ENCODE measurements at regions of chr12 and their contacts with region 1.

Region 1: DNA sequence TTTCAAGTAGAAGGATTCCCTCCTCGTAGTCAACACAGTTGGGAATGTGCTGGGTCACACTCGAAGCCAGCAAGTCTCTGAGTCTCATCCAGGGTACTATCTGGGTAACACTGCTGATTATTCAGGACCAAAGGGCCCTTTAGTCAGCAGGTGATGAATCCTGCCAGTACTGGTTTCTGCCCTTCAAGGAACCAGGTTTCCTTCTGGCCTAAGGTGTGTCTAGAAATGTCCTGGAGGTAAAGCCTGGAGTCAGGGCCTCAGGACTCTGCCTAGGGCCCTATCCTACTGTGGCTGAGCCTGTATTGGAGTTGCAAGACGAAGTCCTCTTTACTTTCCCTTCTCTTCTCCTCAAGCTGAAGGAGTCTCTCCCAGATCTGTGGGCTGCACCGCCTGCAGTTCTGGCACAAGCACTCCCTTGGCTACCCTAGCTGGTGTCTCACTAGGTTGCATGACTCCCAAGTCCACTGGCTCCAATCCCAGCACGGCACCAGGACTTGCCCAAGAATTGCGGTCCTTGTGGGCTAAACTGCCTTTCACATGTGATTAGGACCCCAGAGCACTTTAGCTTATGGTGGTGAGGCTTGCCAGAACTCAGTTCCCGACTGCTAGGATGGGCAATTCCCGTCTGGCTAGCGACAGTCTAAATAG is 193.7 kb upstream of the PDE3A start:
- DNase-seq: no peak
- ATAC-seq: no peak
- H3K4me3 ChIP-seq: no peak overlapping the region
- H3K27ac ChIP-seq: no peak overlapping the region
- H3K4me1 ChIP-seq: no peaks in the 10 kb centered on the region
- H3K27me3 ChIP-seq: no peaks in the 10 kb centered on the region
- CTCF ChIP-seq: no peak
- POLR2A ChIP-seq: no peak
- RAD21 ChIP-seq: no peak

Region 2: GRCh38 chr12:19779393-19780056 is 395.1 kb before region 1 on chr12:
- CTCF ChIA-PET with region 1: no interaction called
- POLR2A ChIA-PET with region 1: no interaction called
- dilution Hi-C with region 1: no loop called
- in situ Hi-C with region 1: no loop called
- intact Hi-C with region 1: no loop called
- DNase-seq: no peak
- ATAC-seq: peak; percentile 79
- H3K4me3 ChIP-seq: no peak overlapping the region
- H3K27ac ChIP-seq: no peak overlapping the region
- H3K4me1 ChIP-seq: peaks cover 13% of the 10 kb centered on the region
- H3K27me3 ChIP-seq: no peaks in the 10 kb centered on the region
- CTCF ChIP-seq: no peak
- POLR2A ChIP-seq: no peak
- RAD21 ChIP-seq: no peak

Region 3: DNA sequence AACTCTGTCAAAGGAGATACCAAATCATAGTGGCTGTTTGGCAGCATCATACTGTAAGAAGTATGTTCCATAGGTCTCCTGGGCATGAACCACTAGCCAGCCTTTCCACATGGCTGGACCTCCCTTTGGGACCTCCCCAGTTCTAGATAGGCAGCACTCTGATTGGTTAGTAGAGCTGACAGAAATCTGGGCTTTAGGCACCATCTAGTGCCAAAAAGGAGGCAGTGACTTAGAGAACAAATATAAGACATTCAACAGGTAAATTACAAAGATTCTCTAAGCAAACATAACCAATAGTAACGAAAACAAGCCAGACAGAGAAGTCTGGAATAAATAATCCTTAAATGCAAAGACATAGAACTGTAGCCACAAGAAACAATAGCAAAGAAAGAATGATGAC is 45.7 kb after region 1 on chr12:
- CTCF ChIA-PET with region 1: no interaction called
- POLR2A ChIA-PET with region 1: no interaction called
- dilution Hi-C with region 1: no loop called
- in situ Hi-C with region 1: no loop called
- intact Hi-C with region 1: loop called (anchors 1 kb)
- DNase-seq: peak; percentile 34
- ATAC-seq: 0 out of 2 replicates have a peak, but pooled peaks have one; percentile 17
- H3K4me3 ChIP-seq: no peak overlapping the region
- H3K27ac ChIP-seq: no peak overlapping the region
- H3K4me1 ChIP-seq: no peaks in the 10 kb centered on the region
- H3K27me3 ChIP-seq: no peaks in the 10 kb centered on the region
- CTCF ChIP-seq: peak; percentile 34; the same call in 1 of the 2 replicates
- POLR2A ChIP-seq: no peak
- RAD21 ChIP-seq: peak; percentile 45

Region 4: GRCh38 chr12:20494851-20495250 is 320.2 kb after region 1 on chr12:
- CTCF ChIA-PET with region 1: no interaction called
- POLR2A ChIA-PET with region 1: no interaction called
- dilution Hi-C with region 1: no loop called
- in situ Hi-C with region 1: no loop called
- intact Hi-C with region 1: no loop called
- DNase-seq: peak; percentile 59
- ATAC-seq: peak; percentile 44; the same call in 1 of the 2 replicates
- H3K4me3 ChIP-seq: no peak overlapping the region
- H3K27ac ChIP-seq: no peak overlapping the region
- H3K4me1 ChIP-seq: peaks cover 16% of the 10 kb centered on the region
- H3K27me3 ChIP-seq: no peaks in the 10 kb centered on the region
- CTCF ChIP-seq: no peak
- POLR2A ChIP-seq: no peak
- RAD21 ChIP-seq: no peak